ENCODE measurements at regions of chr15 and their contacts with region 1.

Region 1: DNA sequence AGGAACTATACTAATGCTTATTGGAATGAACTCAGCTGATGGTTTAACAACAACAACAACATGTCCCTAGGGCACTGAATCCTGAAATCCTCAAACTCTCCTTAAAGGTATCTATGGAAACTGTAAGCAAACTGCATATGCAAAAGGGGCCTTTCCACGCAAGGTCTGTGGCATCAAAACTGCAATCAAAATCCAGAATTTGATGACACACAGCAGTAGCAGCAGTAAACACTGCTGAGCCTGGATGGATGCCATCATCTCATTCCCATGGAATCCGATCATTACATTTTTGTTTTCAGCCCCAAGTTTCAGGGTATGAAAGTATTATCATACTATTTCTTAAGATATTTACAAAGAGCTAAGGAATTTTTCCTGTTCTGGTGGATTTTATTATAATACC is 399.7 kb downstream of the VPS13C start:
- DNase-seq: no peak
- ATAC-seq: no peak
- H3K4me3 ChIP-seq: no peak overlapping the region
- H3K27ac ChIP-seq: no peak overlapping the region
- H3K4me1 ChIP-seq: peaks cover 0 to 6% (median 0%) of the 10 kb centered on the region in 9 donors
- H3K27me3 ChIP-seq: peaks cover 0 to 36% (median 4%) of the 10 kb centered on the region in 7 donors
- CTCF ChIP-seq: no peak

Region 2: GRCh38 chr15:60585743-60586708 is 1074.6 kb before region 1 on chr15:
- intact Hi-C with region 1: loop called in 1 of 10 experiments (anchors 10 kb)
- DNase-seq: peak in 1 of 2 donors; percentile 71
- ATAC-seq: peak; percentile 61 to 87 (median 76)
- H3K4me3 ChIP-seq: no peak overlapping the region
- H3K27ac ChIP-seq: peak overlapping the region in 2 of 10 donors; percentile 28 to 52
- H3K4me1 ChIP-seq: peaks cover 2 to 72% (median 38%) of the 10 kb centered on the region in 9 donors
- H3K27me3 ChIP-seq: peaks cover 0 to 28% (median 0%) of the 10 kb centered on the region in 7 donors
- CTCF ChIP-seq: peak; percentile 74 to 97 (median 91)

Region 3: GRCh38 chr15:61282661-61283060 is 377.9 kb before region 1 on chr15:
- intact Hi-C with region 1: no loop called
- DNase-seq: no peak
- ATAC-seq: no peak
- H3K4me3 ChIP-seq: no peak overlapping the region
- H3K27ac ChIP-seq: no peak overlapping the region
- H3K4me1 ChIP-seq: no peaks in the 10 kb centered on the region
- H3K27me3 ChIP-seq: peaks cover 0 to 29% (median 5%) of the 10 kb centered on the region in 7 donors
- CTCF ChIP-seq: no peak

Measured in heart right ventricle (tissue), 16 donors.